CD4-positive, alpha-beta T cell (primary cell): ENCODE measurements at regions of chr19 and their contacts with region 1.

Region 1: GRCh38 chr19:54203151-54203611 is 2.5 kb downstream of the RPS9 start:
- DNase-seq: no peak
- ATAC-seq: no peak
- H3K4me3 ChIP-seq: no peak overlapping the region
- H3K4me3 Mint-ChIP-seq: peak overlapping the region; percentile 73
- H3K27ac ChIP-seq: no peak overlapping the region
- H3K27ac Mint-ChIP-seq: peak overlapping the region; percentile 93
- H3K4me1 ChIP-seq: peaks cover 83% of the 10 kb centered on the region
- H3K4me1 Mint-ChIP-seq: peaks cover 68% of the 10 kb centered on the region
- H3K27me3 ChIP-seq: no peaks in the 10 kb centered on the region
- H3K27me3 Mint-ChIP-seq: no peaks in the 10 kb centered on the region
- CTCF ChIP-seq: no peak

Region 2: DNA sequence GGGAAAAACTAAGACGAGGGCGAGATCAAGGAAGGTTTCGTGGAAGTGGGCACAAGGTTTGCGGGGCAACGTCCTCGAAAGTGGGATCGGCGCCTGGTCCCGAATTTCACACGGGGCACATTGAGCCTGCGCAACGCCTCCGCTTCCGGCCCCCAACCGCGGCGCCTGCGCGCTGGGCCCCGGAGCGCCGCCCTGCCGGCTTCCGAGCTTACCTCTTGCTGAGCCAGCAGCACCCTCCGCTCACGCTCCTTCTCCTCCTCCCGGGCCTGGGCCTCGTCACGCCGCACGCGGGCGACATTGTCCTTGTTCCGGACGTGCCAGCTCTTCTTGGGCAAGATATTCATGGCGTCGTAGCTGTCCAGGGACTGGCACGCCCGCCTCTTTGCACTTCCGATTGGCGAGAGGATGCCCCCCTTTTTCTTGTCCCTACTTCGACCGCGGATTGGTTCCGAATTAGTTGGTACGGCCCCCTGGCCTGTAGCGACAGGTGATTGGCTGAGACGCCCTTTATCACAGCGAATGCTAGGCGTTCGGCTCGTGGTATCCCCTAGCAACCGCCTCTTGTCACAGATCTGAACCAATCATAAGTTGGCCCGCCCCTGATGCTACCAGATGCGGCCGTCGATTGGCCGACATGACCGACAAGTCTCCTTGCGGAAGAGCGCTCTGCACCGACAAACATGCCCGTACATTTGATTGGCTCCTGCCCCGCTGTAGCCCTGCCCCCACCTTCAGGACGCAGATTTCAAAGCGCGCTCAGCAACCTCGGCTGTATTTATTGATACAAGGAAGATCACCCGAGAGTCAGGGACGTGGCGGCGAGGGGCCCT is 43.6 kb before region 1 on chr19 and contains the start of gene LENG1:
- CTCF ChIA-PET with region 1: no interaction called
- POLR2A ChIA-PET with region 1: interaction called, 20 read pairs
- intact Hi-C with region 1: loop called in 1 of 2 experiments (anchors 2 kb)
- DNase-seq: peak; percentile 91 to 100 (median 98)
- ATAC-seq: peak; percentile 84
- H3K4me3 ChIP-seq: peak within 1 kb of the TSS; percentile 90
- H3K4me3 Mint-ChIP-seq: peak within 1 kb of the TSS; percentile 98
- H3K27ac ChIP-seq: peak within 1 kb of the TSS; percentile 86 to 92
- H3K27ac Mint-ChIP-seq: peak within 1 kb of the TSS; percentile 94
- H3K4me1 ChIP-seq: peaks cover 81% of the 10 kb centered on the region
- H3K4me1 Mint-ChIP-seq: peaks cover 55% of the 10 kb centered on the region
- H3K27me3 ChIP-seq: no peaks in the 10 kb centered on the region
- H3K27me3 Mint-ChIP-seq: no peaks in the 10 kb centered on the region
- CTCF ChIP-seq: no peak
- total RNA-seq, gene LENG1: 14.4 to 16.0 TPM